ENCODE measurements at regions of chr1 and their contacts with region 1.

Region 1: GRCh38 chr1:95475686-95476457 is 241.9 kb downstream of the RWDD3 start:
- DNase-seq: no peak

Region 2: GRCh38 chr1:95309031-95309471 is 166.8 kb before region 1 on chr1:
- intact Hi-C with region 1: loop called (anchors 10 kb)
- DNase-seq: no peak

Measured in cardiac septum (tissue), 1 donor.